Activated CD4-positive, alpha-beta T cell treated with anti-CD3 and anti-CD28 coated beads, Interleukin-2, amount 10 ng/mL, durations not matched to agents 24 days and 14 days (primary cell): ENCODE measurements at regions of chr7 and their contacts with region 1.

Region 1: GRCh38 chr7:156892821-156893706 is at the start of gene LMBR1:
- DNase-seq: peak; percentile 97
- H3K4me3 Mint-ChIP-seq: peak within 1 kb of the TSS; percentile 94
- H3K27ac Mint-ChIP-seq: peak within 1 kb of the TSS; percentile 94
- H3K4me1 Mint-ChIP-seq: peaks cover 36% of the 10 kb centered on the region
- H3K27me3 Mint-ChIP-seq: no peaks in the 10 kb centered on the region
- total RNA-seq, gene LMBR1: 57.0 and 63.6 TPM in 2 replicates

Region 2: GRCh38 chr7:155298834-155299534 is 1594.1 kb before region 1 on chr7:
- intact Hi-C with region 1: loop called (anchors 2 kb)
- DNase-seq: peak; percentile 99
- H3K4me3 Mint-ChIP-seq: peak overlapping the region; percentile 94
- H3K27ac Mint-ChIP-seq: peak overlapping the region; percentile 97
- H3K4me1 Mint-ChIP-seq: peaks cover 42% of the 10 kb centered on the region
- H3K27me3 Mint-ChIP-seq: no peaks in the 10 kb centered on the region

Region 3: GRCh38 chr7:156640257-156640948 is 252.7 kb before region 1 on chr7 and contains the start of gene RNF32:
- intact Hi-C with region 1: loop called (anchors 2 kb)
- DNase-seq: peak; percentile 99
- H3K4me3 Mint-ChIP-seq: peak within 1 kb of the TSS; percentile 97
- H3K27ac Mint-ChIP-seq: peak within 1 kb of the TSS; percentile 99
- H3K4me1 Mint-ChIP-seq: peaks cover 41% of the 10 kb centered on the region
- H3K27me3 Mint-ChIP-seq: peaks cover 11% of the 10 kb centered on the region
- total RNA-seq, gene RNF32: 2.3 and 2.4 TPM in 2 replicates

Region 4: GRCh38 chr7:156927571-156928405 is 34.7 kb after region 1 on chr7:
- intact Hi-C with region 1: loop called (anchors 1 kb)
- DNase-seq: no peak
- H3K4me3 Mint-ChIP-seq: no peak overlapping the region
- H3K27ac Mint-ChIP-seq: no peak overlapping the region
- H3K4me1 Mint-ChIP-seq: peaks cover 36% of the 10 kb centered on the region
- H3K27me3 Mint-ChIP-seq: peaks cover 45% of the 10 kb centered on the region

Region 5: GRCh38 chr7:157138424-157139110 is 245.5 kb after region 1 on chr7 and contains the start of gene UBE3C:
- intact Hi-C with region 1: loop called (anchors 1 kb)
- DNase-seq: peak; percentile 98
- H3K4me3 Mint-ChIP-seq: peak within 1 kb of the TSS; percentile 88
- H3K27ac Mint-ChIP-seq: peak within 1 kb of the TSS; percentile 99
- H3K4me1 Mint-ChIP-seq: peaks cover 31% of the 10 kb centered on the region
- H3K27me3 Mint-ChIP-seq: no peaks in the 10 kb centered on the region
- total RNA-seq, gene UBE3C: 89.9 and 95.4 TPM in 2 replicates

Region 6: DNA sequence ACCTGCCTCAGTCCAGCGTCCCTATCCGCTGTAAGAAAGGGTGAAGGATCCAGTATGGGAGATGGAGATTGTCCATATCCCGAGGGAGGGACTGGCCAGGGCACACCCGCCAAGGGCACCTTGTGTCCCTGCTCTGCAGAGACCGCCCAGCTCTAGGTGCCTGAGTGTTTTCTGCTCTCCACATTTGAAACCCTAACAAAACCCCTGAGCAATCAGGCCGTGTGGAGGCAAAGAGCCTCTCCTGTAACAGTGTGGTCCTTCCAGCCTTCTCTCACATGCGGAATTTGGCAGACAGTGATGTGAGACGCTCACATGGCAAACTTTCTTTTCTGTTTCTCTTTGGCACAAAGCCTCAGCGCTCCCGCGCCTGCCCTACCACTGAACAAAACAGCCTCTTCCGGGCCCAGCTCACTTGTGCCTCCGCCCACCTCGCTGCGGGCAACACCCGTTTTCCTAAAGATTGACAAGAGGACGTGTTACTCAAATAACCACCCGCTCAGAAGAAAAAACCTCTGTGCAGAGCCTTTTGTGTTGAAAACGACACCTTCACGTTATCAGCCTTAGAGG is 958.5 kb after region 1 on chr7:
- intact Hi-C with region 1: loop called (anchors 10 kb)
- DNase-seq: peak; percentile 95
- H3K4me3 Mint-ChIP-seq: peak overlapping the region; percentile 81
- H3K27ac Mint-ChIP-seq: peak overlapping the region; percentile 90
- H3K4me1 Mint-ChIP-seq: peaks cover 10% of the 10 kb centered on the region
- H3K27me3 Mint-ChIP-seq: no peaks in the 10 kb centered on the region